Heart right ventricle (tissue), 16 donors: ENCODE measurements at regions of chr3 and their contacts with region 1.

Region 1: DNA sequence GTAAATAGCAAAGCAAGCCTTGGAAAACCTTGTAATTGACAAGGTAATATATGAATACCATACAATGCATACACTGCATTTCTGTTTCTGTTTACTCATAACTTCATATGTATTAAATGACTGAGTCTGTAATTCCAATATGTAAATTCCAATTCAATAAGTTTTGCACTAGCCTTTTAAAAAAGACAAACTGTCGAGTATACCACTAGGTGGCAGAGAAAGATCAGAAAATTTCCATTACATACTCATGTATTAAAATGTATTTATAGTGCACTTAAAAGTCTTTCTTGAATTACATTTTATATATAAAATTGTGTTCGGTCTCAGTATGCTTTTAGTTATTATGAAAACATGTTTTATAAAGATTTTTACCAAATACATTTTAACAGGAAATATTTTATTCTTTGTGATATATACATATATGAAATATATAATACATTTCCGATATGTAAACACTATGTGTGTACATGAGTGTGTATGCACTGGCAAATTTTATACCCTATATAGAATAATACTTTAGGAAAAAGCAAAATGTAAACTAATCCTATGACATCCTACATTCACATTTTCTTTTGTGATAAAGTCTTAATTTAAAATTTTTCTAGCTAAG is 216.8 kb downstream of the VGLL3 start:
- DNase-seq: no peak
- ATAC-seq: no peak
- H3K4me3 ChIP-seq: no peak overlapping the region
- H3K27ac ChIP-seq: no peak overlapping the region
- H3K4me1 ChIP-seq: no peaks in the 10 kb centered on the region
- H3K27me3 ChIP-seq: no peaks in the 10 kb centered on the region
- CTCF ChIP-seq: peak; percentile 13 to 64 (median 46)

Region 2: GRCh38 chr3:86733257-86733656 is 40.9 kb before region 1 on chr3:
- intact Hi-C with region 1: no loop called
- DNase-seq: no peak
- ATAC-seq: no peak
- H3K4me3 ChIP-seq: no peak overlapping the region
- H3K27ac ChIP-seq: no peak overlapping the region
- H3K4me1 ChIP-seq: no peaks in the 10 kb centered on the region
- H3K27me3 ChIP-seq: no peaks in the 10 kb centered on the region
- CTCF ChIP-seq: no peak

Region 3: GRCh38 chr3:87088993-87089841 is 315.0 kb after region 1 on chr3:
- intact Hi-C with region 1: loop called in 8 of 10 experiments (anchors 2 to 10 kb)
- DNase-seq: peak; percentile 39 to 55
- ATAC-seq: peak; percentile 88 to 97 (median 92)
- H3K4me3 ChIP-seq: peak overlapping the region; percentile 33 to 71 (median 58)
- H3K27ac ChIP-seq: peak overlapping the region; percentile 66 to 91 (median 80)
- H3K4me1 ChIP-seq: peaks cover 0 to 13% (median 3%) of the 10 kb centered on the region in 9 donors
- H3K27me3 ChIP-seq: peaks cover 0 to 3% (median 0%) of the 10 kb centered on the region in 7 donors
- CTCF ChIP-seq: no peak

Region 4: GRCh38 chr3:87167628-87168456 is 393.7 kb after region 1 on chr3:
- intact Hi-C with region 1: loop called (anchors 5 to 10 kb)
- DNase-seq: peak in 1 of 2 donors; percentile 15
- ATAC-seq: no peak
- H3K4me3 ChIP-seq: peak overlapping the region in 7 of 10 donors; percentile 15 to 47 (median 38)
- H3K27ac ChIP-seq: no peak overlapping the region
- H3K4me1 ChIP-seq: peaks cover 0 to 3% (median 0%) of the 10 kb centered on the region in 9 donors
- H3K27me3 ChIP-seq: peaks cover 0 to 6% (median 0%) of the 10 kb centered on the region in 7 donors
- CTCF ChIP-seq: peak in 8 of 9 donors; percentile 33 to 74 (median 65)

Region 5: DNA sequence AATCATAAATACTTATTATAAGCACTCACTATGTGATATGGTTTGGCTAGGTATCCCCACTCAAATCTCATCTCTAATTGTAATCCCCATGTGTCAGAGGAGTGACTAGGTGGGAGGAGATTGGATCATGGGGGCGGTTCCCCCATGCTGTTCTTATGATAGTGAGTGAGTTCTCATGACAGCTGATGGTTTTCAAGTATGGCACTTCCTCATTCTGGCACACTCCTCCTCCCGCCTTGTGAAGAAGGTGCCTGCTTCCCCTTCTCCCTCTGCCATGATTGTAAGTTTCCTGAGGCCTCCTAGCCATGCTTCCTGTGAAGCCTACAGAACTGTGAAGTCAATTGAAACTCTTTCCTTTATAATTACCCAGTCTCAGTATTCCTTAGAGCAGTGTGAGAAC is 399.6 kb after region 1 on chr3:
- intact Hi-C with region 1: loop called (anchors 5 to 10 kb)
- DNase-seq: no peak
- ATAC-seq: no peak
- H3K4me3 ChIP-seq: no peak overlapping the region
- H3K27ac ChIP-seq: no peak overlapping the region
- H3K4me1 ChIP-seq: no peaks in the 10 kb centered on the region
- H3K27me3 ChIP-seq: peaks cover 0 to 3% (median 0%) of the 10 kb centered on the region in 7 donors
- CTCF ChIP-seq: no peak